ENCODE measurements at regions of chr11 and their contacts with region 1.

Region 1: DNA sequence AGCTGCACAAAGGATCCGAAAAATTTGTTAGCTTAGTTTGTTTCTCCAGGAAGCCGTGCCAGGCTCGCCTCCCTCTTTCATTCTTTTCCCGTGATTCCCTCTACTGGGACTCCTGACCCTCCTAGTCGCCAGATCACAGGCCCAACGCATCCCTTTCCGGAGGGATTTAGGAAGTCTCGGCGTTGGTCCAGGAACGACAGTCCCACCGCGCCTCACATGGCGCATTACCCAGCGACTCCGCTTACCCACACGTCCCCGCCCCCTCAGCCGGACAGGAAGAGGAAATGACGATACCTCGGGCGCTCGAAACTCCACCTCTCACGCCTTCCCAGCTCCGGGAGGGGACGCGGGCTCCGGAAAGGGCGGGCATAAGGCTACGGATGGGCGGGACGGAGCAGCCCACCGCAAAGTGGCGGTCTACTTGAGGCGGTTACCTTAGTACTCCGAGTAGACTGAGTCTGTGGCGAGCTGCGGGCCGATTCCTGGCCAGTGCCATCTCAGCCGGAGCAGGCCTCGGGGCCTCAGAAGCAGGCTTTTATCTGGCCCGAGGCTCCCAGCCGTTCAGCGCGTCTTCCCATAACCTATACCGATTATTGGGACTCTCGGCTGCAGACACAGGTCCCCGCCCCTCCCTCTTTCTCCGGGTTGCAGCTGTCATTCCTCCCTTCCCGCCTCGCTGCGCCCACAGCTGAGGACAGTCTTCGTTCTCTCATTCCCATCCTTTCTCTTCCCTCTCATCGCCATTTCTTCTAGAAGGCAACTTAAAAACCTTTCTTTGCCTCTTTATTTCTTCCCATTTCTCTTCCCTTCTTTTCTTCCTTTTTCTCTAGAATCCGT is at the start of gene CCDC15:
- DNase-seq: peak; percentile 95 to 99
- H3K4me3 ChIP-seq: peak within 1 kb of the TSS; percentile 36
- CTCF ChIP-seq: no peak
- POLR2A ChIP-seq: peak in 1 of 2 donors; percentile 51
- total RNA-seq, gene CCDC15: 2.1 to 4.2 (median 2.9) TPM

Region 2: DNA sequence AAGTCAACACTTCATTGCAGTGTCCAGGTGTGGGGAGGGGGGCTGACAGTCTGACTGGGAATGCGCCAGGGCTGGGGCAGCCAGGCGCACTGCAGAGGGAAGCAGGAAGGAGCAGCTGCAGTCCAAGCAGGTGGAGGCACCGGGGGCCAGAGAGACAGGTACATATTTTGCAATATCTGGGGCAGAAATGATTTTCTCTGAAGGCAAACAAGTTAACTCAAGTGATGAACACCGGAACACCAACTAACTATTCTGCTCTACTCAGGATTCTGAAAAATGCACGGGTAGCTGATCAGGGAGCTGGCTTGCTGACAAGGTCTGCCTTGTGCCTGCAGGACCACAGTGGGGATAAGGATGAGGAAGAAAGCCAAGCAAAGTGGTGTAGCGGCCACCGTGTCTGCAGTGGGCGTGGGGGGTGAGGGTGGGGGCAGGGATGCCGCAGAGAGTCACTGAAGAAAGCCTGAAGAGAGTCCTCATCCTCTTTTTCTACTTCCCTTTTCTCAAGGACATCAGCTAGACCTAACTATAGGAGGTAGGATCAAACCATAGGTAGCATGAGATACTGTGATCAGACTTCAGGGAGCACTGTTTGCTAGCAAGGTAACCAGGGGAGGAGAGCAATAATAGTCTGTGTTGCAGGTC is 1382.9 kb before region 1 on chr11:
- intact Hi-C with region 1: no loop called
- DNase-seq: no peak
- H3K4me3 ChIP-seq: no peak overlapping the region
- CTCF ChIP-seq: no peak
- POLR2A ChIP-seq: no peak

Region 3: DNA sequence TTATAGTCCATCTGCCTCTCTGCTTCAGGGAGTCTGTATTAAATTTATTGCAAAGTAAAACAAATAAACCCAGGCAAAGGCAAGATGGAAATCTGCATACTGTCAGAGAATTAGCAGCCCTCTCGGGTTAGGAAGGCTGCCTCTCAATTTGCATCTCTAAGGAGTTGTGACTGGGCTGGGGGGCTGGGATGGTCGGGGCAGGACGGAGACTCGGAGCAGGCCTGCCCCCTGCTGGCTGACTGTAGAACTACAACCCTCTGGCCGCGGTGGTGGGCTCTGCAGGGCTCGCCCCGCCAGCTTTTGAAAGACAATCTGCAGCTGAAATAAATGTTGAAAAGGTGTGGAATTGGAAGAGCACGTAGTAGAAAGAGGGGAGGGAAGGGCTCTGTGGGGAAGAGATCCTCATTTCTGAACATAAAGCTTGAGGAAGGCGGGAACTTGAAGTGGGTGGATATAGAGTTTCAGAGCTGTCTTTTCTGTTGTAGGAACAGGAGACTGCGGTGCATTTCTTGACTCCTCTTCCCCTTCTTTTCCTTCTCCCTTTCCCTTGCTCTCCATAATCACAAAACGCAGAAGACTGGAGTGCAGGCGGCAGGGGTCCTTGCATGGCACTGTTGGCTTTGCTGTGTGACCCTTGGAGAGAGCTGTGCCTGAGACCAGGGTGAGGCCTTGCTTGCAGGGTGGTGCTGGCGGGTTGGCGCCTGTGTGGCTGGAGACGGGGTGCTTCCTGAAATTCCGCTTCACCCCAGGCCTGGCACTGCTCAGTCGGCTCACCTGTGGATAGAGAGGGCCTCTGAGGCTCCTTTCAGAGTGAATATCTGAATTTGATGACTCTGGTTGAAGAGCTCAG is 187.9 kb after region 1 on chr11:
- intact Hi-C with region 1: loop called (anchors 10 kb)
- DNase-seq: no peak
- H3K4me3 ChIP-seq: no peak overlapping the region
- CTCF ChIP-seq: no peak
- POLR2A ChIP-seq: no peak

Region 4: GRCh38 chr11:125345421-125346178 is 391.6 kb after region 1 on chr11:
- intact Hi-C with region 1: loop called (anchors 5 kb)
- DNase-seq: peak; percentile 72 to 94
- H3K4me3 ChIP-seq: no peak overlapping the region
- CTCF ChIP-seq: peak in 1 of 3 donors; percentile 31
- POLR2A ChIP-seq: no peak

Measured in lower leg skin (tissue), 4 donors.